ENCODE measurements at regions of chr20 and their contacts with region 1.

Region 1: GRCh38 chr20:2840138-2840966 is at the starts of genes PCED1A and VPS16:
- DNase-seq: peak; percentile 89 to 90
- H3K4me3 ChIP-seq: peak within 1 kb of the TSS; percentile 75 to 100 (median 99)
- H3K27ac ChIP-seq: peak within 1 kb of the TSS; percentile 88 to 92 (median 91)
- H3K4me1 ChIP-seq: peaks cover 17 to 25% of the 10 kb centered on the region in 2 donors
- H3K27me3 ChIP-seq: no peaks in the 10 kb centered on the region
- CTCF ChIP-seq: no peak
- POLR2A ChIP-seq: peak in 1 of 2 donors; percentile 64
- total RNA-seq, gene PCED1A: 38.0 to 95.9 (median 63.4) TPM
- total RNA-seq, gene VPS16: 26.7 to 44.9 (median 43.4) TPM

Region 2: DNA sequence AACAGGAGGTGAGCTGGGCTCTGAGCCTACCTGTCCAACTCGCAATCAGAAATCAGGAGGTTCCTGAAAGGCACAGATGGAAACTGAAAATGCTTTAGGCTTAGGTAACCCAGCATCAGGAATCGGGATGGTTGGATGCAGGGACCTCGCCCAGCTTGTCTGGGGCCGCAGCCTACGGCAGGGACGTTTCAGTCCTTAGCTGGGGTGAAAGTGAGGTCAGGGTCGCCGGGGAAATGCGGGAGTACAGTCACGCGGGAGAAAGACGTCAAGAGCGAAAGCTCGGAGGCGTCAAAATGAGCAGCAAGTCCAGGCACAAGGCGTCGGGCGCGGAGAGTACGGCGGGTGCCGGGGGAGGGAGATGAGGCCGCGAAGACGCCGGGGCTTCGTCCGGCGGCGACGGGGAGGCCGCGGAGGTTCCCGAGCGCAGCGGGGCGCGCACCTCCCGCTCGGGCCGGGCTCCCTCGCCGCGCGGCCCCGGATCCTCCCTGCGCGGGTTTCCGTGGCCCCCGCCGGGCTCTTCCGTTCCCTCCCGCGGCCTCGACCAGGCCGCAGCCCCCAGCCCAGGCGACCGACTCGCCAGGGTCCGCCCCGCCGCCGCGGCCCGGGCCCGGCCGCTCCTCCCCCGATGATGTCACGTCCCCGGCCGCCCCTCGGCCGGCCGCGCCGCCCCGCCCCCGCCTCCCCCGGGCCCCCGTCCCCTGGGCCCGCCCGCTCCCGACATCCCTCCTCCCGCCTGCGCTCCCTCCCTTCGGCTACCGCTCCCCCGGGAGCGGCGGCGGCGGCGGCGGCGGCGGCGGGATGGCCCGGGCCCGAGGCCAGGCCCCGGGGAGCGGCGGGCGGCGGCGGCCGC is 148.1 kb before region 1 on chr20 and contains the start of gene EBF4:
- intact Hi-C with region 1: loop called (anchors 5 kb)
- DNase-seq: peak; percentile 65 to 69
- H3K4me3 ChIP-seq: peak within 1 kb of the TSS; percentile 32 to 58 (median 42)
- H3K27ac ChIP-seq: peak within 1 kb of the TSS; percentile 25 to 73 (median 50)
- H3K4me1 ChIP-seq: peaks cover 3 to 22% of the 10 kb centered on the region in 2 donors
- H3K27me3 ChIP-seq: no peaks in the 10 kb centered on the region
- CTCF ChIP-seq: no peak
- POLR2A ChIP-seq: peak in 1 of 2 donors; percentile 67
- total RNA-seq, gene EBF4: 24.2 to 55.8 (median 42.4) TPM

Region 3: GRCh38 chr20:2752567-2753460 is 87.5 kb before region 1 on chr20:
- intact Hi-C with region 1: loop called (anchors 10 kb)
- DNase-seq: peak; percentile 48 to 56
- H3K4me3 ChIP-seq: peak overlapping the region in 1 of 3 donors; percentile 36
- H3K27ac ChIP-seq: no peak overlapping the region
- H3K4me1 ChIP-seq: peaks cover 31 to 40% of the 10 kb centered on the region in 2 donors
- H3K27me3 ChIP-seq: no peaks in the 10 kb centered on the region
- CTCF ChIP-seq: peak; percentile 35 to 52 (median 44)
- POLR2A ChIP-seq: no peak

Measured in thyroid gland (tissue), 4 donors.